Activated T-helper 1 cell treated with anti-CD3 and anti-CD28 coated beads, Interleukin-12 subunit alpha, Interleukin-12 subunit beta, Interleukin-2, Interleukin-4 antibody, amounts not matched to agents 30 ng/mL and 10 ng/mL and 1 ng/mL, durations not matched to agents 14 hours and 24 hours and 36 hours (primary cell): ENCODE measurements at regions of chr7 and their contacts with region 1.

Region 1: GRCh38 chr7:149261829-149262617 is at the start of gene ZNF783:
- DNase-seq: peak; percentile 81
- H3K4me3 Mint-ChIP-seq: peak within 1 kb of the TSS; percentile 88
- H3K27ac Mint-ChIP-seq: peak within 1 kb of the TSS; percentile 95
- H3K4me1 Mint-ChIP-seq: peaks cover 29% of the 10 kb centered on the region
- H3K27me3 Mint-ChIP-seq: no peaks in the 10 kb centered on the region
- total RNA-seq, gene ZNF783: 24.1 and 25.6 TPM in 2 replicates

Region 2: DNA sequence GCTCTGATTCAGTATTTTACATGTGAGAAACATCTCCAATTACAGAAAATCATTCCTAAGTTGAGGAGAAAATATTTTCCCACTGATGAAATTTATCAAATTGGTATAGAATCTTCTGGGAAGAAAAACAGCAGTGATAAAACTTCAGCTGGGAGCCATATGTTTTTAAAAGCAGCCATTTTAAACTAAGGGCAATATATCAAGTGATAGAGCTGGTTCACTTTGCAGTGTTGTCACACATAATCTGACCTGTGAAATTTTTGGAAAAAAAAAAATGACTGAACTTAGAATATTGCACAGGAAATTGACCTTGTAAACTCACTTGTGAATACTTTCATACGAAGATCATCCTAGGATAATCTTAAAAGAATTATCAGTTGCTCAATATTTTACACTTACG is 367.4 kb before region 1 on chr7:
- intact Hi-C with region 1: no loop called
- DNase-seq: no peak
- H3K4me3 Mint-ChIP-seq: no peak overlapping the region
- H3K27ac Mint-ChIP-seq: no peak overlapping the region
- H3K4me1 Mint-ChIP-seq: no peaks in the 10 kb centered on the region
- H3K27me3 Mint-ChIP-seq: peaks cover 8% of the 10 kb centered on the region

Region 3: DNA sequence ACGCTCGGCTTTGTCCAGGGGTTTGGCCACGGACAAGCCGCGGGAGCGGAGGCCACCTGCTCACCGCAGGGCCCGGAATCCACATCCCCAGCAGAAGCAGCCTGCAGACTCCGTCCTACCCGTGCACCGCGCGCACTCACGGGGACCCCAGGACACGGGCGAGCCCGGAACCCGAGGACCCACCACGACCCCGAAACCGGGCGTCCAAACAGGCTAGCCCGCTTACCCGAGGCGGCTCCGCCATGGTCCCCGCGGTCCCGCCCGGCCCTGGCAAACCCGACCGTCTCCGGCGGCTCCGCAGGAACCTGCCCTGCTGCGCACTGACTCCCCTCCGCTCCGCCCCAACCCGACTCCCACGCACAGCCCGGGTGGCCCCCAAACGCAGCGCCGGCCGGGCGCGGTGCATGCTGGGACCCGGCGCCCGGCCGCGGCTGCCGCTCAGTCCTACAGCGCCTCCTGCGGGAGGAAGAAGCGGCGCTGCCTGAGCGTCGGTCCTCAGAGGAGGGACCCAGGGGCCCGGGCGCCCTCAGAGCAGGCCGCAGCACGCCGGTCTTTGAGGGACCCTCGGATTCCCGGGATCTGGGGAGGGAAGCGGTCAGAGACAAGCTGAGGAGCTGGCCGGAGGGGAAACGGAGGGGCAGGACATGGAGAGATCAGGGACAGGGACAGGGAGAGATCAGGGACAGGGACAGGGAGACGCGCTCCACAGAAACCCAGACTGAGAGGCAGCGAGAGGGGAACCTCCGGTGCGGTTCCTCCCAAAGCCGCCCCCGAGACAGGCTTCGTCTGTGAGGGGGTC is 171.4 kb before region 1 on chr7 and contains the start of gene ZNF786:
- intact Hi-C with region 1: loop called (anchors 2 kb)
- DNase-seq: peak; percentile 87
- H3K4me3 Mint-ChIP-seq: peak within 1 kb of the TSS; percentile 99
- H3K27ac Mint-ChIP-seq: peak within 1 kb of the TSS; percentile 100
- H3K4me1 Mint-ChIP-seq: peaks cover 17% of the 10 kb centered on the region
- H3K27me3 Mint-ChIP-seq: peaks cover 2% of the 10 kb centered on the region
- total RNA-seq, gene ZNF786: 9.9 and 10.9 TPM in 2 replicates

Region 4: GRCh38 chr7:149195180-149196150 is 66.6 kb before region 1 on chr7 and contains the start of gene ZNF282:
- intact Hi-C with region 1: loop called (anchors 5 kb)
- DNase-seq: peak; percentile 73
- H3K4me3 Mint-ChIP-seq: peak within 1 kb of the TSS; percentile 90
- H3K27ac Mint-ChIP-seq: peak within 1 kb of the TSS; percentile 90
- H3K4me1 Mint-ChIP-seq: peaks cover 55% of the 10 kb centered on the region
- H3K27me3 Mint-ChIP-seq: peaks cover 3% of the 10 kb centered on the region
- total RNA-seq, gene ZNF282: 49.4 and 55.8 TPM in 2 replicates

Region 5: DNA sequence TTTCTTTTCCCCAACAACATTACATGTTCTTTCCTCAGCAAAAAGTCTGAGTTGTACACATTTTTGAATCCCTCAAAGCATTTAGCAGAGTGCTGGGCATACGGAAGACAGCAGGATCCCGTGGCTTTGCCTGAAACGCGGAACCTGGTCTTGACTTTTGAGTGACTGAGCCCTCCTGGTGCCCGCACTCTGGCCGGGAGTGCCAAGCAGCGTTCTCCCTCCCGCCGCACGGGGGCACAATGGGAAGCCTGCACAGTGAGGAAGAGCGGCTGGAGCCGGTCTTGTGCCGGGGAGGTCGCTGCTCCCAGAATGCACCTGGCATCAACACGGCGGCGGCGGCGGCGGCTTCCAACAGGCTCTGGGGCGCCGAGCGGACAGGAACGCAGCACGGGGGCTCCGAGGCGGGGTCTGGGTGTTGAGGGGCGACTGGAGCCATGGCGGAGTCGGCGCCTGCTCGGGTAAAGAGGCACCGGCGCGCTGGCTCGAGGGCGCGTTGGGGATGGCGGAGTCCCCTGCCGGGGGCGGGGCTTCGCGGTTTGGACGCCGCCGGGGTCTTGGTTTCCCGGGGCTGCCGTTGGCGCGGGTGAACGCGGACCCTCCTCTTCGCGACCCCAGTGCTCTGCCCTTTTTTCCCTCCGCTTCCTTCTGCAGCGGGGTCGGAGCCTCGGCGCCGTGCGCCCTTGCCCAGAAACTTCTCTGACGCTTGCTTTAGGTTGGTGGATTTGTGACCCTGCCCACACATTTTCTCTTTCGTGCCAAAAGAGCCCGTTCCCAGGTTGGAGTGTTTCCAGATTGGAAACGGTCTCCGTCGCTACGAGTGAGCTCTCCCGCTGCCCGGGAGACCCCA is 22.5 kb before region 1 on chr7 and contains the start of gene ZNF212:
- intact Hi-C with region 1: loop called (anchors 1 kb)
- DNase-seq: peak; percentile 84
- H3K4me3 Mint-ChIP-seq: peak within 1 kb of the TSS; percentile 92
- H3K27ac Mint-ChIP-seq: peak within 1 kb of the TSS; percentile 81
- H3K4me1 Mint-ChIP-seq: peaks cover 27% of the 10 kb centered on the region
- H3K27me3 Mint-ChIP-seq: no peaks in the 10 kb centered on the region
- total RNA-seq, gene ZNF212: 15.0 and 17.8 TPM in 2 replicates

Region 6: GRCh38 chr7:149284850-149285626 is 23.0 kb after region 1 on chr7:
- intact Hi-C with region 1: loop called (anchors 1 kb)
- DNase-seq: peak; percentile 98
- H3K4me3 Mint-ChIP-seq: peak overlapping the region; percentile 94
- H3K27ac Mint-ChIP-seq: peak overlapping the region; percentile 52
- H3K4me1 Mint-ChIP-seq: peaks cover 33% of the 10 kb centered on the region
- H3K27me3 Mint-ChIP-seq: no peaks in the 10 kb centered on the region

Region 7: GRCh38 chr7:149297034-149297755 is 35.2 kb after region 1 on chr7:
- intact Hi-C with region 1: no loop called
- DNase-seq: no peak
- H3K4me3 Mint-ChIP-seq: no peak overlapping the region
- H3K27ac Mint-ChIP-seq: peak overlapping the region; percentile 47
- H3K4me1 Mint-ChIP-seq: peaks cover 4% of the 10 kb centered on the region
- H3K27me3 Mint-ChIP-seq: no peaks in the 10 kb centered on the region

Region 8: GRCh38 chr7:149422129-149422913 is 160.3 kb after region 1 on chr7:
- intact Hi-C with region 1: loop called (anchors 1 kb)
- DNase-seq: peak; percentile 73
- H3K4me3 Mint-ChIP-seq: peak overlapping the region; percentile 66
- H3K27ac Mint-ChIP-seq: peak overlapping the region; percentile 61
- H3K4me1 Mint-ChIP-seq: no peaks in the 10 kb centered on the region
- H3K27me3 Mint-ChIP-seq: peaks cover 4% of the 10 kb centered on the region

Region 9: DNA sequence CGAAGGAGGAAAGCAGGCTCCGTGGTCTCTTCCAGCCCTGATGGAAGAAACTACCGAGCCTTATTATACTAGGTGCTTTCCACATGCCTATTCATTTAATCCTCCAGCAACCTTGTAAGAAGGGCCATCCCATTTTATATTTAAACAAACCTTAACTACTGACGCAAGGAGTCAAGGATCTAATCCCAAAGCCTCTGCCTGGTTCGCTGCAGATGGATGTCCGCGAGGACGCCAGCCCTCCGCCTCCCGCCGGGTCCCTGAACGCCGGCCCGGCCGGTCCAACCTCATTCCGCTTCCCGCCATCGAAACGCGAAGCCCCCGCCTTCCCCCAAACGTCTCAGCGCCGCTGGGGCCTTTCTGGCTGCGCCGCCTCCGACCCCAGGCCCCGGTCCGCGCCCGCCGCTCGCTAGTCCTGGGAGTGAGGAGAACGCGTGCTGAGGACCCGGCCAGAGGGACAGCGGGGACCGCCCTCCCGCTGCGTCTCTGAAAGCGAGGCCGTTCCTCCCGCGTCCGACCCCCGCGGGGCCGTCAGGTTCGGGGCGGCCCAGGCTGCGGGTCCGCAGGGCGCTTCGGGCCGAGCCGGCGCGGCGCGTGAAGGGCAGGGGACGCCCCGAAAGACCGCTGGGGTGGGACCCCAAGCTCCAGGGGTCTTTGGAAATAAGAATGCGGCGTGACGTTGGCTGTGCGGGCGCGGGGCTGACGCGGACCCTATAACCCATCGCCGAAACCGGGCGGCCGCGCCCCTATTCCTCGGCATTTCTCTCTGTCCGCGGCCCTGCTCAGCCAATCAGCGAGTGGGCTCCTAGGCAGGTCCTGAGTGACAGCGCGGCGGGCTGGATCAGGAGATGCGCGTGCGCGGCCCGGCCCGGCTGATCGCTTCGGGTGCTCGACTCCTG is 611.3 kb after region 1 on chr7 and contains the start of gene ATP6V0E2:
- intact Hi-C with region 1: loop called (anchors 5 kb)
- DNase-seq: peak; percentile 92
- H3K4me3 Mint-ChIP-seq: peak within 1 kb of the TSS; percentile 90
- H3K27ac Mint-ChIP-seq: peak within 1 kb of the TSS; percentile 92
- H3K4me1 Mint-ChIP-seq: peaks cover 75% of the 10 kb centered on the region
- H3K27me3 Mint-ChIP-seq: no peaks in the 10 kb centered on the region
- total RNA-seq, gene ATP6V0E2: 47.5 and 51.2 TPM in 2 replicates